ENCODE measurements at regions of chr20 and their contacts with region 1.

Region 1: GRCh38 chr20:36745927-36746659 is at the start of gene NDRG3:
- DNase-seq: peak; percentile 81 to 93 (median 91)
- ATAC-seq: peak; percentile 100
- H3K4me3 ChIP-seq: peak within 1 kb of the TSS; percentile 93
- H3K4me3 Mint-ChIP-seq: peak within 1 kb of the TSS; percentile 85 to 94 (median 90)
- H3K27ac ChIP-seq: peak within 1 kb of the TSS; percentile 70
- H3K27ac Mint-ChIP-seq: peak within 1 kb of the TSS; percentile 83 to 97 (median 88)
- H3K4me1 ChIP-seq: peaks cover 5 to 7% of the 10 kb centered on the region in 2 donors
- H3K4me1 Mint-ChIP-seq: peaks cover 20 to 41% (median 29%) of the 10 kb centered on the region in 7 donors
- H3K27me3 ChIP-seq: no peaks in the 10 kb centered on the region
- H3K27me3 Mint-ChIP-seq: no peaks in the 10 kb centered on the region
- total RNA-seq, gene NDRG3: 20.8 to 30.6 (median 28.9) TPM

Region 2: DNA sequence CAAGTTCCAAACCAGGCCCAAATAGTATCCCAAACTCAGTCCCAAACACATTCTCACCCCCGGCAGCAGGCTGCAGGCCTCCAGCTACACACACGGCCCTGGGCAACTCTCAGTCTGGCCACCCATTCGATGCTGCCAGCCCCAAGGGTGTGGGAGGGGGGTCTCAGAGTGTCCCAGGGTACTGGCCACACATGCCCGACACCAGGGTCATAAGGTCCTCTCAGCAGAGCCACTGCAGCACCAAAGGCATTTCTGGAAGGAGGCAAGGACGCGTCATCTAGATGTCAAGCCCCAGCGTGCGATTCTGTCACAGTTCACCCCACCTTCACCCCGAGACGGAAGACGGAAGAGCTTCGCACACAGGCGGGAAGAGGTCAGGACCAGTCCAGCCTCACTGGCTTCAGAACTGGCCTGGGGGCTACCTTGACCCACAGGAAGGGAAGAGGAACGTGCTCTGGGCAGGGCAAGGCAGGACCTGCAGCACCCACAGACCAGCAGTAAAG is 195.2 kb before region 1 on chr20:
- CTCF ChIA-PET with region 1: no interaction called
- POLR2A ChIA-PET with region 1: no interaction called
- intact Hi-C with region 1: loop called in 1 of 2 experiments (anchors 2 kb)
- DNase-seq: no peak
- ATAC-seq: no peak
- H3K4me3 ChIP-seq: no peak overlapping the region
- H3K4me3 Mint-ChIP-seq: no peak overlapping the region
- H3K27ac ChIP-seq: no peak overlapping the region
- H3K27ac Mint-ChIP-seq: peak overlapping the region in 1 of 9 donors; percentile 60
- H3K4me1 ChIP-seq: no peaks in the 10 kb centered on the region
- H3K4me1 Mint-ChIP-seq: peaks cover 0 to 5% (median 2%) of the 10 kb centered on the region in 7 donors
- H3K27me3 ChIP-seq: no peaks in the 10 kb centered on the region
- H3K27me3 Mint-ChIP-seq: no peaks in the 10 kb centered on the region

Region 3: DNA sequence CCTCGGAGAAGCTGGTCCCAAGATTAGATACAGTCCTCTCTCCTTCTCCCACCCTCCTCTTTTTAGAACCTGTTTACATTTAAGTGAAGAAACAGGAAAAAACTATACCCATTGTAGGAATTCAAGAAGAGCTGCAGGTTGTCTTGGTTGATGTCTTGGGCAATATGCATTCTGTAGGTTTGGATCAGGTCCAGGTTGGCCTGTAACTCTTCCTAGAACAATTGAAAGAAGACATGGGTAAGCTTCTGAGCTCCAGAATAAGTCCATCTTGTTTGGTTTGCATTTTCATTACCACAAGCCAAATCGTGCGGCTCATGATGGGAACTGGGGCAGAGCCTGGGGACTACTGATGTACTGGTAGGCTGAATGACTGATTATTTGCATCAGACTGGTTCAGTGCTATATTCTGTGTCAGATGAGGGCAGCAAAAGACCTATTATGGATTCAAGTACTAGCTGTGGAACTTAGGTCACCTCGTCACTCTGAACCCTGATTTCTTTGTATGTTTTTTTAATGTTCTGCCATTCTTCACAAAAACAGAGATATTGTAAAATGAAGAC is 79.8 kb before region 1 on chr20:
- CTCF ChIA-PET with region 1: no interaction called
- POLR2A ChIA-PET with region 1: no interaction called
- intact Hi-C with region 1: loop called in 1 of 2 experiments (anchors 5 kb)
- DNase-seq: peak in 4 of 9 donors; percentile 8 to 28 (median 20)
- ATAC-seq: no peak
- H3K4me3 ChIP-seq: no peak overlapping the region
- H3K4me3 Mint-ChIP-seq: no peak overlapping the region
- H3K27ac ChIP-seq: no peak overlapping the region
- H3K27ac Mint-ChIP-seq: no peak overlapping the region
- H3K4me1 ChIP-seq: no peaks in the 10 kb centered on the region
- H3K4me1 Mint-ChIP-seq: peaks cover 0 to 10% (median 0%) of the 10 kb centered on the region in 7 donors
- H3K27me3 ChIP-seq: no peaks in the 10 kb centered on the region
- H3K27me3 Mint-ChIP-seq: no peaks in the 10 kb centered on the region

Region 4: DNA sequence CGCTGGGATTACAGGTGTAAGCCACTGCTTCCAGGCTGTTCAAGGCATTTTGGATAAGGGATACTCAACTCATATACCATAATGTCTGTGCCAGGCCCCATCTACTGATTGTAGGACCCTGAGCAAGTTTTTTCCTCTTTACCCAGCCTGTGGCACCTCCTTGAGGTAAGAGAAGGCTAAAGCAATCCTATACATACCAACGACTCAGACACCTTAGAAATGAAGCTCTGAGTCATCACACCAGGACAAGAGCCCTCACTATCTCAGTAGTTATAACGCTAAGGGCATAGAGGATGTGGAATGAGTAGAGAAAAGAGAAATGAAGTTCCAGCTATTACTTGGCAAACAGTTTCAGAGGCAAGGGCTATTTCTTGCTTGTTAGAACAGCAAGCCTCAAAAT is 17.1 kb before region 1 on chr20:
- CTCF ChIA-PET with region 1: interaction called, 4 read pairs
- POLR2A ChIA-PET with region 1: interaction called, 5 read pairs
- intact Hi-C with region 1: loop called (anchors 1 to 2 kb)
- DNase-seq: no peak
- ATAC-seq: peak; percentile 29
- H3K4me3 ChIP-seq: no peak overlapping the region
- H3K4me3 Mint-ChIP-seq: no peak overlapping the region
- H3K27ac ChIP-seq: no peak overlapping the region
- H3K27ac Mint-ChIP-seq: peak overlapping the region in 1 of 9 donors; percentile 36
- H3K4me1 ChIP-seq: peaks cover 0 to 7% of the 10 kb centered on the region in 2 donors
- H3K4me1 Mint-ChIP-seq: peaks cover 12 to 26% (median 19%) of the 10 kb centered on the region in 7 donors
- H3K27me3 ChIP-seq: no peaks in the 10 kb centered on the region
- H3K27me3 Mint-ChIP-seq: no peaks in the 10 kb centered on the region

Region 5: DNA sequence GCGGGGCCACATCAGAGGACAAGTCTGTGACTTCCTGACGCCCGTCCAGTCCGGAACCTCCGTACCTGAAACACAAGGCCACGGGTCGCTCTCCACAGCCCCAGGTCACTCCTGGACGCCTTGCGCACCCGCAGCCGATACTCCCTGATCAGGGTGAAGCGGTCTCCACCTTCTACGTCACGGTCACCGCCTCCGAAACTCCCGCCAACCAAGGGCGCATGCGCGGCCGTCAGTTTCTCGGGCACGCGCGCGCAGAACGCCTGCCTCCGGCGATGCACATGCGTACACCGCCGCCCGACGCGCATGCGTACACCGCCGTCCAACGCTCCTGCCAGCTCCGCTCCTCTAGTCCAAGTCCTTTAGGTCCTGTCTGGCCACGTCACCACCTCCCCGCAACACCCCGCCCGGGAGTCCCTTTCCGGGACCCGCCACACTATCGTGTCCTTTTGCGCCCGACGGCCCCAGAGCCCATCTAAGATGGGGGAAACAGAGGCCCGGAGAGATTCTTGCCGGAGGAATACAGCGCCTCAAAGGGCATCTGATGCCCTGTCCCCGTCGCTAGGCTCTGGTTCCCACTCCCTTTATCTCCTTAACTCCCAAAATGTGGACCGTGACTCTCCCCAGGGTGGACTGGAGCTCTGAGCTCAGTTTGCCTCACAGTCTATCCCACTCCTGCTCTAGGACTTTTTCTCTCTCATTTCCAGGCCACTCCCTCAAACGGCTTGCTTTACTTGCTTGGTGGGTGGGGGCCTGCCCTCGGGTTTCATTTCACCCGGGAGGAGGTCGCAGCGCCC is 27.7 kb after region 1 on chr20 and contains the start of gene DSN1:
- CTCF ChIA-PET with region 1: no interaction called
- POLR2A ChIA-PET with region 1: no interaction called
- intact Hi-C with region 1: loop called (anchors 1 kb)
- DNase-seq: peak; percentile 94 to 100 (median 97)
- ATAC-seq: peak; percentile 90
- H3K4me3 ChIP-seq: peak within 1 kb of the TSS; percentile 96
- H3K4me3 Mint-ChIP-seq: peak within 1 kb of the TSS; percentile 83 to 98 (median 95)
- H3K27ac ChIP-seq: peak within 1 kb of the TSS; percentile 93
- H3K27ac Mint-ChIP-seq: peak within 1 kb of the TSS; percentile 90 to 100 (median 97)
- H3K4me1 ChIP-seq: peaks cover 8 to 13% of the 10 kb centered on the region in 2 donors
- H3K4me1 Mint-ChIP-seq: peaks cover 8 to 36% (median 27%) of the 10 kb centered on the region in 7 donors
- H3K27me3 ChIP-seq: no peaks in the 10 kb centered on the region
- H3K27me3 Mint-ChIP-seq: peaks cover 0 to 2% (median 0%) of the 10 kb centered on the region in 5 donors
- total RNA-seq, gene DSN1: 9.2 to 27.5 (median 13.4) TPM

Region 6: GRCh38 chr20:36895036-36895435 is 148.9 kb after region 1 on chr20:
- CTCF ChIA-PET with region 1: no interaction called
- POLR2A ChIA-PET with region 1: no interaction called
- intact Hi-C with region 1: no loop called
- DNase-seq: no peak
- ATAC-seq: peak; percentile 34
- H3K4me3 ChIP-seq: no peak overlapping the region
- H3K4me3 Mint-ChIP-seq: peak overlapping the region in 2 of 10 donors; percentile 3 to 4
- H3K27ac ChIP-seq: peak overlapping the region; percentile 29
- H3K27ac Mint-ChIP-seq: peak overlapping the region; percentile 20 to 90 (median 80)
- H3K4me1 ChIP-seq: no peaks in the 10 kb centered on the region
- H3K4me1 Mint-ChIP-seq: peaks cover 4 to 21% (median 15%) of the 10 kb centered on the region in 7 donors
- H3K27me3 ChIP-seq: no peaks in the 10 kb centered on the region
- H3K27me3 Mint-ChIP-seq: no peaks in the 10 kb centered on the region

Region 7: GRCh38 chr20:36929290-36929689 is 183.2 kb after region 1 on chr20:
- CTCF ChIA-PET with region 1: no interaction called
- POLR2A ChIA-PET with region 1: no interaction called
- intact Hi-C with region 1: no loop called
- DNase-seq: no peak
- ATAC-seq: no peak
- H3K4me3 ChIP-seq: no peak overlapping the region
- H3K4me3 Mint-ChIP-seq: peak overlapping the region in 7 of 10 donors; percentile 25 to 87 (median 52)
- H3K27ac ChIP-seq: peak overlapping the region; percentile 70
- H3K27ac Mint-ChIP-seq: peak overlapping the region; percentile 13 to 99 (median 96)
- H3K4me1 ChIP-seq: peaks cover 30 to 50% of the 10 kb centered on the region in 2 donors
- H3K4me1 Mint-ChIP-seq: peaks cover 23 to 86% (median 66%) of the 10 kb centered on the region in 7 donors
- H3K27me3 ChIP-seq: no peaks in the 10 kb centered on the region
- H3K27me3 Mint-ChIP-seq: no peaks in the 10 kb centered on the region

Region 8: DNA sequence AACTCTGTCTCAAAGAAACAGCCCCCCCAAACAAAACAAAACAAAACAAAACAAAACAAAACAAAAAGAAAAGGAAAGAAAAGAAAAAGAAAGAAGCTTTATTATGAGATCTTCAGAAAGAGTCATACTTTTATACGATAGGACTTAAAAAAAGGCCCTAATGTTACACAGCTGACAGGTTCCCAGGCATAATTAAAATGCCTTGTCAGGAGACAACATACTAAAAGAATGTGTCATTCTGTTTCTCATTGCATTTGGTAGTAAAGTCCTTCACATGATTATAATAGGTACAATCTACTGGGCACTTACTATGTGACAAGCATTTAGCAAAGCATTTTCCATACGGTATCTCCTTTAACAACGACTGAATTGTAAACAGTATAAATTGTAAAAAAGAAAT is 396.6 kb after region 1 on chr20:
- CTCF ChIA-PET with region 1: no interaction called
- POLR2A ChIA-PET with region 1: no interaction called
- intact Hi-C with region 1: no loop called
- DNase-seq: no peak
- ATAC-seq: no peak
- H3K4me3 ChIP-seq: no peak overlapping the region
- H3K4me3 Mint-ChIP-seq: no peak overlapping the region
- H3K27ac ChIP-seq: no peak overlapping the region
- H3K27ac Mint-ChIP-seq: no peak overlapping the region
- H3K4me1 ChIP-seq: no peaks in the 10 kb centered on the region
- H3K4me1 Mint-ChIP-seq: no peaks in the 10 kb centered on the region
- H3K27me3 ChIP-seq: no peaks in the 10 kb centered on the region
- H3K27me3 Mint-ChIP-seq: peaks cover 0 to 5% (median 0%) of the 10 kb centered on the region in 5 donors

Region 9: GRCh38 chr20:38658879-38659596 is 1912.9 kb after region 1 on chr20:
- CTCF ChIA-PET with region 1: no interaction called
- POLR2A ChIA-PET with region 1: no interaction called
- intact Hi-C with region 1: no loop called
- DNase-seq: peak in 3 of 9 donors; percentile 17 to 23 (median 22)
- ATAC-seq: peak; percentile 67
- H3K4me3 ChIP-seq: no peak overlapping the region
- H3K4me3 Mint-ChIP-seq: no peak overlapping the region
- H3K27ac ChIP-seq: no peak overlapping the region
- H3K27ac Mint-ChIP-seq: no peak overlapping the region
- H3K4me1 ChIP-seq: no peaks in the 10 kb centered on the region
- H3K4me1 Mint-ChIP-seq: no peaks in the 10 kb centered on the region
- H3K27me3 ChIP-seq: peaks cover 0 to 10% of the 10 kb centered on the region in 2 donors
- H3K27me3 Mint-ChIP-seq: peaks cover 32 to 52% (median 41%) of the 10 kb centered on the region in 5 donors

Measured in naive thymus-derived CD4-positive, alpha-beta T cell (primary cell).